CD14-positive monocyte (primary cell): ENCODE measurements at regions of chr17 and their contacts with region 1.

Region 1: GRCh38 chr17:78759203-78759968 is 22.7 kb downstream of the CYTH1 start:
- DNase-seq: peak; percentile 51 to 75 (median 64)
- H3K4me3 ChIP-seq: peak overlapping the region in 1 of 3 experiments; percentile 36
- H3K4me3 Mint-ChIP-seq: peak overlapping the region; percentile 57 to 70
- H3K27ac ChIP-seq: peak overlapping the region; percentile 86 to 88
- H3K27ac Mint-ChIP-seq: peak overlapping the region; percentile 92 to 97 (median 95)
- H3K4me1 ChIP-seq: peaks cover 49 to 66% of the 10 kb centered on the region in 2 donors
- H3K4me1 Mint-ChIP-seq: peaks cover 78% of the 10 kb centered on the region
- H3K27me3 ChIP-seq: no peaks in the 10 kb centered on the region
- H3K27me3 Mint-ChIP-seq: no peaks in the 10 kb centered on the region
- CTCF ChIP-seq: no peak

Region 2: DNA sequence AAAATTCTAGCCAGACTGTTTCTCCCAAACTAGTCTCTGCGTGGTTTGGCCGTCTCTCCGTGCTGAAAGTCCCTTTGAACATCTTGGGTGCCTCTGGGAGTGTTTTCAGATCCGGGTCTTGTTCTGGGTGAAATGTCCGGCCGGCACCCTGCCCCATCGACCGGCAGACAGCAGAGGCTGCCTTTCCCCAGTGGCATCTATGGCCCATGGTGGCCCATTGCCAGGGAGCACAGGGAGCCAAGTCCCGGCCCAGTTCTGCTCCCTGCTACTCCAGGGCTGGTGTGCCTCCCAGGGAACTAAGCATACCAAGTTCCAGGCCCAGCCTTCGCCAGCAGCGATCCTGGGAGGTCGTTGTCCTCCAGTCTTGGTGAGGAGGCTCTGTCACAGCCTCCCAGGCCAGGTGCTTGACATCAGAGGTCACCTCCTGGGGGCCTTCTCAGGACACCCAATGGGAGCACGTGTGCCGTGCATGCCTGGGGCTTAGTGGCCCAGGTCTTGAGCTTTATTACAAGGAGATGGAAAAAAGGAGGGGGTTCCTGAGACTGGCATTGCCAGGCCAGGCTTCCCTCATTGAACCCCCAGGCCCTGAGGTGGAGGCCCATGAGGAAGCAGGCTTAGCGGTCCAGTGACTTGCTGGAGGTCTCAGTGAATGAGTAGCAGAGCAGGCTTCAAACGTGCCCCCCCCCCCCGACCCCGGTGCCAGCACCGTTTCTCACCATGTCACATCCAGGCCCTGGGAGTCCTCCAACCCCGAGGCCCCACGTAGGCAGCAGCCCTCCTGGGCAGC is 327.0 kb before region 1 on chr17:
- intact Hi-C with region 1: no loop called
- DNase-seq: no peak
- H3K4me3 ChIP-seq: no peak overlapping the region
- H3K4me3 Mint-ChIP-seq: no peak overlapping the region
- H3K27ac ChIP-seq: no peak overlapping the region
- H3K27ac Mint-ChIP-seq: peak overlapping the region in 2 of 7 donors; percentile 30 to 33
- H3K4me1 ChIP-seq: no peaks in the 10 kb centered on the region
- H3K4me1 Mint-ChIP-seq: peaks cover 4% of the 10 kb centered on the region
- H3K27me3 ChIP-seq: no peaks in the 10 kb centered on the region
- H3K27me3 Mint-ChIP-seq: peaks cover 2 to 9% (median 6%) of the 10 kb centered on the region in 3 donors
- CTCF ChIP-seq: no peak

Region 3: DNA sequence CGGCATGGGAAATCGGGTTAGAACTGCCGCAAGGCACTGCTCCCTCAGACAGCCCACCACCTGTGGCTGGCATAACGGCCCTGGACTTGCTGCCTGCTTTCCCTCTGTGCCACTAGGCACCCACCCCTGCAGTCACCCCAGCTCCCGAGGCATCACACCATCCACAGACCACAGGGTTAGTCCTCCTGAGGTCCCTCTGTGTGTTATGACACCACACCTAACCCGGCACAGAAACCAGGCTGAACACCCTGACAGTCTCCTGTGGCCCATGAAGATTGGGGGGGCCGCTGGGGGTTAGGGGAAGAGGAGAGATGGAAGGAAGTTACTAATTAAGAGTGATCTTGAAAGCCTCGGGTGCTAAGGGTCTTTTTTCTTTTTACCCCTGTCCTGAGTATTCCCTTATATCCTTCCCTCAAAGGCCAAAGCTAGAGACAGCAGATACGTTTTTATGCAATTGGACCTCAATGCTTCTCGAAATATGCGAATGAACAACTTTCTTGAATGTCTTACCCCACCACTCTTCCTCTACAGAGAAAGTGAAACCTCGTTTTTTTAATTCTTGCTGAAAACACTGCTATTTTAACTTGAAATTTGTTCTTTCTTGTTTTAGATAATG is 15.7 kb after region 1 on chr17:
- intact Hi-C with region 1: loop called in 1 of 2 experiments (anchors 2 kb)
- DNase-seq: peak in 2 of 3 donors; percentile 37 to 67
- H3K4me3 ChIP-seq: peak overlapping the region; percentile 5 to 65 (median 27)
- H3K4me3 Mint-ChIP-seq: peak overlapping the region; percentile 79 to 84
- H3K27ac ChIP-seq: peak overlapping the region; percentile 91 to 94
- H3K27ac Mint-ChIP-seq: peak overlapping the region; percentile 94 to 99 (median 98)
- H3K4me1 ChIP-seq: peaks cover 81 to 87% of the 10 kb centered on the region in 2 donors
- H3K4me1 Mint-ChIP-seq: peaks cover 74% of the 10 kb centered on the region
- H3K27me3 ChIP-seq: no peaks in the 10 kb centered on the region
- H3K27me3 Mint-ChIP-seq: no peaks in the 10 kb centered on the region
- CTCF ChIP-seq: no peak

Region 4: GRCh38 chr17:78798695-78799559 is 39.5 kb after region 1 on chr17:
- intact Hi-C with region 1: no loop called
- DNase-seq: peak in 2 of 3 donors; percentile 26 to 32
- H3K4me3 ChIP-seq: no peak overlapping the region
- H3K4me3 Mint-ChIP-seq: no peak overlapping the region
- H3K27ac ChIP-seq: no peak overlapping the region
- H3K27ac Mint-ChIP-seq: peak overlapping the region in 4 of 7 donors; percentile 22 to 83 (median 80)
- H3K4me1 ChIP-seq: peaks cover 9 to 10% of the 10 kb centered on the region in 2 donors
- H3K4me1 Mint-ChIP-seq: peaks cover 14% of the 10 kb centered on the region
- H3K27me3 ChIP-seq: no peaks in the 10 kb centered on the region
- H3K27me3 Mint-ChIP-seq: peaks cover 0 to 1% (median 0%) of the 10 kb centered on the region in 3 donors
- CTCF ChIP-seq: peak; percentile 56